T-cell (primary cell): ENCODE measurements at regions of chr17 and their contacts with region 1.

Region 1: DNA sequence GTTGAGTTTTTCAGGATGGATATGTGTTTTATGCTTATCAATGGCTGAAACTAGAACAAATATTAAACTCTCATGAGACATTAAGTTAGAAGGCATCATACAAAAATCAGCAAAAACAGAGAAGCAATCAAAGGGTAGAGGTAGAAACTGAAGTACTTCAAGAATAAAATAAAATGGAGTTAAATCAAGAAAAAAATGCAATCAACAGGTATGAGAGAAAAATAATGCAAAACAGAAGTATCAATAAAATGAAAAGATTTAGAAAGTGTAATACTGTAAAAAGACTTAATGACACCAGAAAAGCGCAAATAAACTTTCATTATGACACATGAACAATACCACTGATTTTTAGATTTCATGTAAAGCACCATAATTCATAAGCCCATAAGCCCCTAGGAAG is 112.3 kb downstream of the SKAP1 start:
- DNase-seq: no peak
- ATAC-seq: no peak
- H3K4me3 ChIP-seq: no peak overlapping the region
- H3K4me3 Mint-ChIP-seq: no peak overlapping the region
- H3K27ac ChIP-seq: no peak overlapping the region
- H3K27ac Mint-ChIP-seq: no peak overlapping the region
- H3K4me1 ChIP-seq: no peaks in the 10 kb centered on the region
- H3K4me1 Mint-ChIP-seq: peaks cover 41 to 46% (median 45%) of the 10 kb centered on the region in 3 donors
- H3K27me3 ChIP-seq: no peaks in the 10 kb centered on the region
- H3K27me3 Mint-ChIP-seq: no peaks in the 10 kb centered on the region

Region 2: GRCh38 chr17:48198950-48199541 is 118.7 kb before region 1 on chr17:
- CTCF ChIA-PET with region 1: no interaction called
- POLR2A ChIA-PET with region 1: interaction called in 1 of 2 experiments, 10 read pairs
- DNase-seq: no peak
- ATAC-seq: no peak
- H3K4me3 ChIP-seq: no peak overlapping the region
- H3K4me3 Mint-ChIP-seq: no peak overlapping the region
- H3K27ac ChIP-seq: no peak overlapping the region
- H3K27ac Mint-ChIP-seq: peak overlapping the region; percentile 3 to 8
- H3K4me1 ChIP-seq: peaks cover 6 to 16% of the 10 kb centered on the region in 2 experiments
- H3K4me1 Mint-ChIP-seq: peaks cover 54 to 60% (median 59%) of the 10 kb centered on the region in 3 donors
- H3K27me3 ChIP-seq: no peaks in the 10 kb centered on the region
- H3K27me3 Mint-ChIP-seq: no peaks in the 10 kb centered on the region

Region 3: DNA sequence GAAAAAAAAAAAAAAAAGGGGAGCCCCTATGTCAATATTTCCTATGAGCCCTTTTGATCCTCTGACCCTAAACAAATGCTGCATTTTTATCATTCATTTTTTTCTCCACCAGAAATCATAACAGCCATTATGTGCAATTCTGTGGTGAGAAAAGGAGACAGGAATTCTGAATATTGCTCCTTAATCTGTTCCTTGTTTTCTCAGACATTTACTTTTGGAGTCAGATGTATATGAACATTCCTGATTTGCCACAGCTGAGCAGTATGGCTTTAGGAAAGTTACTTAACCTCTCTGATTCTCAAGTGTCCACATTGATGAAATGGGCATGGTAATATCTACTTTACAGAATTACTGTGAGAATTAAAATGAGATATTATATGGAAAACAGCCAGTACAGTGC is 32.1 kb before region 1 on chr17:
- CTCF ChIA-PET with region 1: no interaction called
- POLR2A ChIA-PET with region 1: no interaction called
- DNase-seq: no peak
- ATAC-seq: no peak
- H3K4me3 ChIP-seq: no peak overlapping the region
- H3K4me3 Mint-ChIP-seq: no peak overlapping the region
- H3K27ac ChIP-seq: no peak overlapping the region
- H3K27ac Mint-ChIP-seq: no peak overlapping the region
- H3K4me1 ChIP-seq: no peaks in the 10 kb centered on the region
- H3K4me1 Mint-ChIP-seq: peaks cover 17 to 25% (median 23%) of the 10 kb centered on the region in 3 donors
- H3K27me3 ChIP-seq: no peaks in the 10 kb centered on the region
- H3K27me3 Mint-ChIP-seq: no peaks in the 10 kb centered on the region

Region 4: DNA sequence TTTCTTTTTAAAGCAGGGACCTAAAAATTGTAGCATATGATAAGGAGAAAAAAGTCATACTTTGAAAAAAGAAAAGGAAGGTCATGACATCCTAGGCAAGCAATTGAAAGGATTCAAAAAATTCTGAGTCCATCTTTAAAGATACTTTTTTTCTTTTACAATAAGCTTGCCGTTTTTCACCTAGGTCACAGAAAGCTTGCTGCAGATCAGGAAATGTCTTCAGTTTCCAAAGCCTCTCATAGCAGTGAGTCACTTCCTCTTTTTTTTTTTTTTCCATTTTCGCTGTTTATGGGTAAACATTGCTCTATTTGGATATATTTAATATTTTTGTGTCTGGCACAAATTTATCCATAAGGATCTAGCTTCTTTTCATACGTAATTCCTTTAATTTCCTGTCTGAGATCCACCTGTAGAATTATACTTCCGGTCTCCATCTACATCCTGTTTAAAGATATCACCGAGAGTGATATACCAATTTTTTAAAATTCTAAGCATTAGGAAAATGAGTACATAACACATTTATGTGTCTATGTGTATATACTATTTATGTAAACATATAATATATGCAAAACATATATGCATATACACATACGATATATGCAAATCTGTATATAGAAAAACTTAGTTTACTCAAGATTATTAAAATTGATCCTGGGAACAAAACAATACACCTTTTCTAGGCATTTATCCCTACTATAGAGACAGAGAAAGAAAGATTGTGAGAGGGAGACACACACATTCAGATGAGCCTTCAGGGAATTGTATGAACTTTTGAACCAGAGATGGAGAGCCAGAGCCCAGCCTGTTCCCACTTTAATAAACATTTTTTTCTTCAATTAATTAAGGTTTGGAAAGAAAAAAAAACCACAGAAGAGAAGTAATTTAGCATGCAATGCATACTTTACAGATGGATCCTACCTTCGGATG is 22.1 kb before region 1 on chr17:
- CTCF ChIA-PET with region 1: no interaction called
- POLR2A ChIA-PET with region 1: no interaction called
- DNase-seq: peak in 1 of 35 experiments; percentile 60
- ATAC-seq: peak; percentile 66 to 74 (median 68)
- H3K4me3 ChIP-seq: peak overlapping the region in 1 of 2 donors; percentile 16
- H3K4me3 Mint-ChIP-seq: peak overlapping the region; percentile 55 to 82 (median 67)
- H3K27ac ChIP-seq: peak overlapping the region; percentile 82
- H3K27ac Mint-ChIP-seq: peak overlapping the region; percentile 90 to 98
- H3K4me1 ChIP-seq: peaks cover 4 to 26% of the 10 kb centered on the region in 2 experiments
- H3K4me1 Mint-ChIP-seq: peaks cover 56 to 72% (median 71%) of the 10 kb centered on the region in 3 donors
- H3K27me3 ChIP-seq: no peaks in the 10 kb centered on the region
- H3K27me3 Mint-ChIP-seq: no peaks in the 10 kb centered on the region

Region 5: GRCh38 chr17:48513097-48513496 is 195.4 kb after region 1 on chr17:
- CTCF ChIA-PET with region 1: no interaction called
- POLR2A ChIA-PET with region 1: no interaction called
- DNase-seq: peak in 4 of 35 experiments; percentile 11 to 48 (median 22)
- ATAC-seq: peak in 2 of 4 experiments; percentile 18 to 74
- H3K4me3 ChIP-seq: no peak overlapping the region
- H3K4me3 Mint-ChIP-seq: peak overlapping the region; percentile 67 to 76 (median 68)
- H3K27ac ChIP-seq: no peak overlapping the region
- H3K27ac Mint-ChIP-seq: peak overlapping the region; percentile 68 to 85
- H3K4me1 ChIP-seq: peaks cover 0 to 10% of the 10 kb centered on the region in 2 experiments
- H3K4me1 Mint-ChIP-seq: peaks cover 18 to 45% (median 35%) of the 10 kb centered on the region in 3 donors
- H3K27me3 ChIP-seq: peaks cover 0 to 20% of the 10 kb centered on the region in 2 experiments
- H3K27me3 Mint-ChIP-seq: peaks cover 7 to 24% of the 10 kb centered on the region in 2 donors